Heart left ventricle (tissue), 16 donors: ENCODE measurements at regions of chr1 and their contacts with region 1.

Region 1: GRCh38 chr1:179002552-179003345 is 22.9 kb upstream of the FAM20B start:
- DNase-seq: peak; percentile 62 to 87 (median 71)
- ATAC-seq: peak; percentile 60 to 92 (median 84)
- H3K4me3 ChIP-seq: peak overlapping the region in 1 of 12 donors; percentile 4
- H3K27ac ChIP-seq: no peak overlapping the region
- H3K4me1 ChIP-seq: peaks cover 0 to 8% (median 0%) of the 10 kb centered on the region in 12 donors
- H3K27me3 ChIP-seq: no peaks in the 10 kb centered on the region
- CTCF ChIP-seq: peak; percentile 91 to 98 (median 94)
- POLR2A ChIP-seq: peak in 1 of 2 donors; percentile 21

Region 2: DNA sequence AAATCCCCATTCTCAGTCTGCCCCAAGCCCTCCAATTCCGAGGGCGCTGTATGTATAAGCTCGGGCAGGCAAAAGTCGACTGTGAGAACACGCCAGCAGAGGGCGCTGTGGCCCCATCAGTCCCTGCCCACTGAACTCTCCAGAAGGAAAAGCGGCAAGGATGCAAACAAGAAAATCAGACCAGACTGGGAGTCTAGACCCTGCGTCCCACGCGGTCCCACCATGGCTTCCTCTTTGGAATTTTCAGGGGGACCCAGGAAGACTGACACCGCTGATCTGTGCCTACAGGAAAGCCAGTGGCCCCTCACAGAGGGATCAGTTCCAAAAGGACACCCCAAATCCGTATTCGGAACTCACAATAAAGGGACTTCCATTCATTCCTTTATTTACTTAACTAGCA is 470.4 kb before region 1 on chr1:
- intact Hi-C with region 1: loop called in 2 of 10 experiments (anchors 5 kb)
- DNase-seq: peak; percentile 76 to 91 (median 82)
- ATAC-seq: peak in 3 of 4 donors; percentile 55 to 68 (median 60)
- H3K4me3 ChIP-seq: peak overlapping the region in 1 of 12 donors; percentile 2
- H3K27ac ChIP-seq: peak overlapping the region in 2 of 12 donors; percentile 13 to 41
- H3K4me1 ChIP-seq: peaks cover 0 to 23% (median 9%) of the 10 kb centered on the region in 12 donors
- H3K27me3 ChIP-seq: no peaks in the 10 kb centered on the region
- CTCF ChIP-seq: peak; percentile 78 to 95 (median 90)
- POLR2A ChIP-seq: no peak

Region 3: GRCh38 chr1:178768423-178768822 is 234.3 kb before region 1 on chr1:
- intact Hi-C with region 1: loop called in 4 of 10 experiments (anchors 2 to 5 kb)
- DNase-seq: peak in 1 of 5 donors; percentile 42
- ATAC-seq: peak in 2 of 4 donors; percentile 31 to 47
- H3K4me3 ChIP-seq: no peak overlapping the region
- H3K27ac ChIP-seq: no peak overlapping the region
- H3K4me1 ChIP-seq: no peaks in the 10 kb centered on the region
- H3K27me3 ChIP-seq: no peaks in the 10 kb centered on the region
- CTCF ChIP-seq: peak; percentile 48 to 73 (median 66)
- POLR2A ChIP-seq: no peak

Region 4: DNA sequence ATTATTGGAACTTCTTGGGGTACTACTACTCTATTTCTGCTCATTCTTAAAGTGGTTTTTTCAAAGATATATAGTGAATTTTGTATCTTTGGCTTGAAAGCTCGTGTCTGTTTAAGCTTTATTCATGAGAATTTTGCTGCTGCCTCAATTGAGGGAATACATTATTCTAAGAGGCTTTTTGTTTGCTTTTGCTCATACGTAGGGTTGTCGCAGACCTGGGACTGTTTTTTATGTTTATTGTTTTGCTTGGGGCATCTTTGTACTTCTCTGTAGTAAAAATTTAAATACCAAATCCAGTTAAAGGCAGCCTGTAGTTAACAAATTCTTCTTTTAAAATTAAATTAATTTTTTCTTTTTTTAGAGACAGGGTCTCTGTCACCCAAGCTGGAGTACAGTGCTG is 194.2 kb before region 1 on chr1:
- intact Hi-C with region 1: loop called in 9 of 10 experiments (anchors 1 to 10 kb)
- DNase-seq: no peak
- ATAC-seq: no peak
- H3K4me3 ChIP-seq: no peak overlapping the region
- H3K27ac ChIP-seq: no peak overlapping the region
- H3K4me1 ChIP-seq: peaks cover 0 to 4% (median 0%) of the 10 kb centered on the region in 12 donors
- H3K27me3 ChIP-seq: no peaks in the 10 kb centered on the region
- CTCF ChIP-seq: no peak
- POLR2A ChIP-seq: no peak

Region 5: GRCh38 chr1:178870944-178871343 is 131.8 kb before region 1 on chr1 and contains the start of gene ANGPTL1:
- intact Hi-C with region 1: loop called in 1 of 10 experiments (anchors 5 kb)
- DNase-seq: peak in 1 of 5 donors; percentile 17
- ATAC-seq: peak in 3 of 4 donors; percentile 24 to 50 (median 44)
- H3K4me3 ChIP-seq: peak within 1 kb of the TSS in 10 of 12 donors; percentile 6 to 54 (median 45)
- H3K27ac ChIP-seq: peak within 1 kb of the TSS in 10 of 12 donors; percentile 6 to 67 (median 39)
- H3K4me1 ChIP-seq: peaks cover 0 to 37% (median 17%) of the 10 kb centered on the region in 12 donors
- H3K27me3 ChIP-seq: no peaks in the 10 kb centered on the region
- CTCF ChIP-seq: no peak
- POLR2A ChIP-seq: no peak
- total RNA-seq, gene ANGPTL1: 7.9 to 31.1 (median 17.6) TPM

Region 6: DNA sequence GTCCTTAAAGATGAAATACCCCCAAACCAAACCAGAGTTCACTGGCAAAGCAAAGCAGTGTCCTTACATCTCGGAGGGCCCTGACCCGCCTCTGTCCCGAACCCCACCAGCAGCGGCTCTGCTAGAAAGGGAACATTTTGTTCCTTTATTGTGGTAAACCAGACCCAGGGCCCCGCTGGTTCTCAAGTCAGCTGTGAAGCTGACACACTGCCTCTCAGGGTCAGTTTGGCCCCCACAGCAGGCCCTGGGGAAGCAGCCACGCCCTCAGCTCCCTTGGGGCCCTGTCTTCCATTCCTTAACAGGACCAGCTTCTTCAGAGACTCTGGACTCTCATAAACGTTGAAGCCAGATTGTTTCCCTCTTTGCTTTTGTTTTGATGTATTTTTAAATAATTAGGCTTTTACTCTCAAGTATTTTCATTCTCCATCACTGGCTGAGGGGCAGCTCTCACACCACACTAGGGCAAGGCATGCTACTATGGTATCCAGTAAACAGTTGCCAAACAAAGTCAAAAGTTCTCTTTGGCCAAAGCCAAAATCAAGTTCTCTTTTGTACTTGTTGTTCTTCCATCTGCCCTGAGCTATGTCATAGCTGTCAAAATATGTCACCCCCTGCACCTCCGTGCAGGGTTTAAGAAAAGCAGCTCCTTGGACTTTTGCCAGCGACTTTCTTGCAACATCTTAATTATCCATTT is 70.7 kb before region 1 on chr1:
- intact Hi-C with region 1: no loop called
- DNase-seq: peak; percentile 28 to 83 (median 79)
- ATAC-seq: peak; percentile 90 to 96 (median 93)
- H3K4me3 ChIP-seq: no peak overlapping the region
- H3K27ac ChIP-seq: peak overlapping the region; percentile 62 to 92 (median 81)
- H3K4me1 ChIP-seq: peaks cover 0 to 65% (median 33%) of the 10 kb centered on the region in 12 donors
- H3K27me3 ChIP-seq: no peaks in the 10 kb centered on the region
- CTCF ChIP-seq: no peak
- POLR2A ChIP-seq: no peak

Region 7: DNA sequence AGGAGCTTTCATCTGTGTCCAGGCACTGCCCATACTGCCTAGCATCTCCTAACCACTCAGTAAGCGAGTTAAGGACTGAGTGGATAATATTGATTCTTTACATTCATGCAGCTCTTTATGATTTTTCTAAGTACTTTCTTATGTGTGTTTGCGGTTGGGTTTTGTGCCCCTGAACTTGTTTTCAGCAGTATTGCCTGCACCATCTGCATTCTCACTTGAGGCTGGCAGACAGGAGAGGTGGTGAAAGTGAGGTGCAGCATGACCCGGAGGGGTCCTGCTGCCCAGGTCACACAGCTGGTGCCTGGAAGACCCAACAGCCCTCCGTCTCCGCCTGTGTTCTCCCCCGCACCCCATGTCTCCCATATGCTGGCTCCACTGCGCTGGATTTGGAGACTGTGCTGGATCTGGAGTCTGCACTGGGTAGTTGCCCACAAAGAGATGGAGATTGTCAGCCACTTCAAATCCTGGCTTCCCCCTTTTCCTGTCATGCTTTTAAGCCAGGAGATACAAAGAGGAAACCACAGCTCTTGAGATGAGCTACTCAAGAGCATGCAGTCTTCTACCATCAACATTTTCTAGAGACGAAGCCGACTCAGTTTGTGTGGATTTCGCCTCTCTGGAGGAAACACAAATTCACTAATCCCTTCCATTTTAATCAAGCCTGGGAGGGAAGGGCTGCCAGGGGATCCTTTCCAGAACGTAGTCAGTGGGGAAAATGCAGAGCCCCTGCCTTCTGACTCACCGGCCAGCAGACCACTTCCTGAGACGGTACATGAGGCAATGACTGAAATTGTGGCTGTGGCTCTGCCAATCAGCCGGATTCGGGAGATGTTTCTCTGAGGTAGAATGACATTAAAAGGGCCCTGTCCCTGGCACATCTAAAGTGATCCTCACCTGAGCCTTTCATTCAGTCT is 60.2 kb before region 1 on chr1:
- intact Hi-C with region 1: no loop called
- DNase-seq: peak in 2 of 5 donors; percentile 56 to 63
- ATAC-seq: peak in 1 of 4 donors; percentile 38
- H3K4me3 ChIP-seq: no peak overlapping the region
- H3K27ac ChIP-seq: peak overlapping the region in 1 of 12 donors; percentile 25
- H3K4me1 ChIP-seq: peaks cover 5 to 51% (median 23%) of the 10 kb centered on the region in 12 donors
- H3K27me3 ChIP-seq: no peaks in the 10 kb centered on the region
- CTCF ChIP-seq: no peak
- POLR2A ChIP-seq: no peak